Naive thymus-derived CD4-positive, alpha-beta T cell (primary cell): ENCODE measurements at regions of chr22 and their contacts with region 1.

Region 1: DNA sequence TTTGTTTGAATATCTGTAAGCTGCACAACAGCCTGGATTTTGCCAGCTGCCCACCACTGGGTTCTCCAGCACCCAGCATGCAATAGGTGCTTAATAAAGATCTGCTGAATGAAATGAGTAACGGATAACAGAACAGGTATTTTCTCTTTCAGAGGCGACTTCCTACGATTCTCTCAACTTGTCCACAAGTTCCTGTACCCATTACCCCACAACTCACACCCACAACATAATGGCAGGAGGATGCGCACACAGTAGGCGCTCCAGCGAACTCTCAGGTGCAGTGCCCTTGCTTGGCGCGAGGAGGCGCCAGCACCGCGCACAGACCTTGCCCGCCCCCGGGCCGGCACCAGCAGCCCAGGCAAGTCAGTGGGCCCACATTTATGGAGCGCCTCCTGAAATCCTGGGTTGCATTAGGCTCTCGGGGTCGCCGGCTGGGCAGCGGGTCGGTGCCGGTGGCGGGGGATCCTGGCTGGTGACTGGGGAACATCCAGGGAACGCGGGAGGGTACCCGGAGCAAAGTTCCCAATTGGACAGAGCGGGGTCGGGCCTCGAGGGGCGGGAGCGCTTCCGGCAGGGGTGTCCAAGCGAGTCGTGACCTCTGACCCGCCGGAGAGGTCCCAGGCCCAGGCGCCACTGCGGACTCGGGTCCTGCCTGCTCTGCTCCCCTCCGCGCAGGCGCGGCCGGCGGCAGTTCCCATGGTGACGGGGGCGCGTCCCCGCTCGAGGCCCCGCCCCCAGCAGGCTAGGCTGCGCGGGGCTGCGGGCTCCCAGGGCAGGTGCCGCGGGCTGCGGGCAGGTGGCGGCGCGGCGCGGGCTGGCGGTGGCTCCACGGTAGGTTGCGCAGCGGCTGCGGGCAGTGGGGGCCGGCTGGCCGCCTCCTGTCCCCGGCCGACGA is at the start of gene KIAA1671:
- DNase-seq: peak; percentile 78 to 95 (median 88)
- ATAC-seq: peak; percentile 96
- H3K4me3 ChIP-seq: peak within 1 kb of the TSS; percentile 86
- H3K4me3 Mint-ChIP-seq: peak within 1 kb of the TSS; percentile 64 to 88 (median 80)
- H3K27ac ChIP-seq: no peak within 1 kb of the TSS
- H3K27ac Mint-ChIP-seq: peak within 1 kb of the TSS in 5 of 9 donors; percentile 49 to 83 (median 65)
- H3K4me1 ChIP-seq: peaks cover 8 to 9% of the 10 kb centered on the region in 2 donors
- H3K4me1 Mint-ChIP-seq: peaks cover 4 to 32% (median 16%) of the 10 kb centered on the region in 7 donors
- H3K27me3 ChIP-seq: peaks cover 3% of the 10 kb centered on the region in 2 donors
- H3K27me3 Mint-ChIP-seq: peaks cover 48 to 74% (median 55%) of the 10 kb centered on the region in 5 donors
- total RNA-seq, gene KIAA1671: 2.8 to 19.0 (median 4.5) TPM

Region 2: DNA sequence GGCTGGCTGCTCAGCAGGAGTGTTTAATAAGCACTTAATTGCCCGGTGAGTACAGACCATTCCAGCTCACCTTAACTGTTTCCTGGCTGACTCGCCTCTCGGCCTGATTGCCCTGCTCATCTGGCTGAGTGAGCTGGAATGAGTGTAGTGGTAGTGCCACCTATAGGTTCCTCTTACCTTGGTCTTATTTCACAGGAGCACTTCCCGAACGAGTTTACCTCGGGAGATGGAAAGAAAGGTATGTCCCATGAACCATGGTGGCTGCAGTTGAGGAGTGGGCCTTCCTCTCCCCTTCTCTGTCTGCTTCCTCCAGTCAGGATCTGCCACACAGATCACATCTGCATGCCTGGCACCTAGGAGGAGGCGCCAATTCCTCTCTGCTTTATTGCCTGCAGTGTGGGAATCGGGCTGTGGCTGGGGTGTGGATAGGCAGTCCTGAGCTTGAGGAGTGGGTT is 430.4 kb before region 1 on chr22:
- CTCF ChIA-PET with region 1: no interaction called
- POLR2A ChIA-PET with region 1: no interaction called
- intact Hi-C with region 1: no loop called
- DNase-seq: peak in 7 of 9 donors; percentile 5 to 39 (median 19)
- ATAC-seq: peak; percentile 48
- H3K4me3 ChIP-seq: no peak overlapping the region
- H3K4me3 Mint-ChIP-seq: peak overlapping the region in 2 of 10 donors; percentile 51 to 61
- H3K27ac ChIP-seq: no peak overlapping the region
- H3K27ac Mint-ChIP-seq: peak overlapping the region in 1 of 9 donors; percentile 63
- H3K4me1 ChIP-seq: no peaks in the 10 kb centered on the region
- H3K4me1 Mint-ChIP-seq: peaks cover 0 to 18% (median 10%) of the 10 kb centered on the region in 7 donors
- H3K27me3 ChIP-seq: no peaks in the 10 kb centered on the region
- H3K27me3 Mint-ChIP-seq: peaks cover 0 to 3% (median 0%) of the 10 kb centered on the region in 5 donors

Region 3: GRCh38 chr22:24532103-24532520 is 420.1 kb before region 1 on chr22:
- CTCF ChIA-PET with region 1: no interaction called
- POLR2A ChIA-PET with region 1: no interaction called
- intact Hi-C with region 1: no loop called
- DNase-seq: no peak
- ATAC-seq: no peak
- H3K4me3 ChIP-seq: no peak overlapping the region
- H3K4me3 Mint-ChIP-seq: no peak overlapping the region
- H3K27ac ChIP-seq: no peak overlapping the region
- H3K27ac Mint-ChIP-seq: no peak overlapping the region
- H3K4me1 ChIP-seq: no peaks in the 10 kb centered on the region
- H3K4me1 Mint-ChIP-seq: no peaks in the 10 kb centered on the region
- H3K27me3 ChIP-seq: no peaks in the 10 kb centered on the region
- H3K27me3 Mint-ChIP-seq: peaks cover 0 to 8% (median 0%) of the 10 kb centered on the region in 5 donors

Region 4: DNA sequence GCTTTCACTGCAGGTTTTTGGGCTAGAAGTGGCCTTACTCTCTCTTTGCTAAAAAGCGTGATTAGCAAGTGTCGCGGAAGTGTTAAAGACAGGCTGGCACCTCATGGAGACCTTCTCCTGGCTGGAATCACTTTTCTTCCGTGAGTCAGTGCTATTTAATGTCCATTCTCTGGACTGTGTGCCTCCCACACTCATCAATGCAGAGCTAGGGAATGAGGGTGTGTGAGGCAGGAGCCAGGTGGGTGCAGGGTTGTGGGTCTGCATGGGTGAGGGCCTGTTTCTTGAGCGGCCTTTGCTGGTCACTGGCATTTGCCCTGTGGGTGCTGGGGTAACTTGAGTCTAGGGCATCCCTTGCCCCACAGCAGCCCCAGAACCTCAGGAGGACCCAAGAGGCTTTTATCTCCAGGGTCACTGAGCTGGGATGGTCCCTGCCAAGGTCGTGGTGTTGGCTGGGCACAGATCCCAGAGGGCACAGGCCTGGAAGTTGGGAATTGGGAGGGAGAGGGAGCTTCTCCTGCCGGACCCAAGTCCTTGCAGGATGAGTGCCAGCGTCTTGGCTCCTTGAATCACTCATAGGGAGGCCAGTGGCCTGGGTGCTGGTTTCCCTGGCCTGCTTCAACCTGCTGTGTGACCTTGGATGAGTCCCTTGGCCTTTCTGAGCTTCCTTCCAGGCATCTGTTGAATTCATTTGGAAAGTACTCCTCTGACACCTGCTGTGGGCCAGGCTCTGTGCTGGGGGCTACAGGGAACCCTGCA is 30.3 kb after region 1 on chr22:
- CTCF ChIA-PET with region 1: no interaction called
- POLR2A ChIA-PET with region 1: no interaction called
- intact Hi-C with region 1: no loop called
- DNase-seq: no peak
- ATAC-seq: no peak
- H3K4me3 ChIP-seq: no peak overlapping the region
- H3K4me3 Mint-ChIP-seq: no peak overlapping the region
- H3K27ac ChIP-seq: no peak overlapping the region
- H3K27ac Mint-ChIP-seq: no peak overlapping the region
- H3K4me1 ChIP-seq: peaks cover 0 to 4% of the 10 kb centered on the region in 2 donors
- H3K4me1 Mint-ChIP-seq: peaks cover 0 to 18% (median 4%) of the 10 kb centered on the region in 7 donors
- H3K27me3 ChIP-seq: no peaks in the 10 kb centered on the region
- H3K27me3 Mint-ChIP-seq: peaks cover 0 to 19% (median 13%) of the 10 kb centered on the region in 5 donors

Region 5: GRCh38 chr22:24994070-24994763 is 42.0 kb after region 1 on chr22:
- CTCF ChIA-PET with region 1: no interaction called
- POLR2A ChIA-PET with region 1: no interaction called
- intact Hi-C with region 1: loop called in 1 of 2 experiments (anchors 2 kb)
- DNase-seq: peak in 1 of 9 donors; percentile 53
- ATAC-seq: no peak
- H3K4me3 ChIP-seq: no peak overlapping the region
- H3K4me3 Mint-ChIP-seq: peak overlapping the region in 1 of 10 donors; percentile 65
- H3K27ac ChIP-seq: no peak overlapping the region
- H3K27ac Mint-ChIP-seq: peak overlapping the region in 1 of 9 donors; percentile 89
- H3K4me1 ChIP-seq: no peaks in the 10 kb centered on the region
- H3K4me1 Mint-ChIP-seq: peaks cover 0 to 66% (median 0%) of the 10 kb centered on the region in 7 donors
- H3K27me3 ChIP-seq: no peaks in the 10 kb centered on the region
- H3K27me3 Mint-ChIP-seq: peaks cover 9 to 28% (median 20%) of the 10 kb centered on the region in 5 donors